Tibial artery (tissue), 4 donors: ENCODE measurements at regions of chr3 and their contacts with region 1.

Region 1: DNA sequence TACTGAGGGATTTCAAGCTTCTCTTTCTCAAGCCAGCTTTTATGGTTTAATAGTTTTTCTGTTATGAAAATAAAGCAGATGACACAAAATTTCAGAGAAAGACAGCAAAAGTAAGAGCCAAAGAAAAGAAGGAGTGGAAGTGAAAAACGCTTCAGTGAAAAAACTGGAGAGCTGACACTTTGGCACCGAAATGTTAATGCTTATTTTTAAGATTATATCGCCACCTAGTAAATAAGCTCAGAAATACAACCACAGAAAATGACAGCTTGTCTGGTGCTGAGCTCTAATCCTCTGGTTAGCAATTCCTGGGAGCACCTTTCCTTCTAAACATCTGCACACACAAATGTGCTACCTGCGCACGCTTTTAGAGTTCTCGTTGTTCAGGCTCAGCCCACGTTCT is 101.6 kb downstream of the ZPLD1 start:
- DNase-seq: no peak
- H3K4me3 ChIP-seq: no peak overlapping the region
- H3K27ac ChIP-seq: no peak overlapping the region
- H3K4me1 ChIP-seq: no peaks in the 10 kb centered on the region
- H3K27me3 ChIP-seq: no peaks in the 10 kb centered on the region
- CTCF ChIP-seq: peak; percentile 42 to 48

Region 2: GRCh38 chr3:101803173-101803782 is 733.2 kb before region 1 on chr3:
- intact Hi-C with region 1: loop called (anchors 10 kb)
- DNase-seq: no peak
- H3K4me3 ChIP-seq: no peak overlapping the region
- H3K27ac ChIP-seq: no peak overlapping the region
- H3K4me1 ChIP-seq: peaks cover 0 to 5% (median 0%) of the 10 kb centered on the region in 4 donors
- H3K27me3 ChIP-seq: no peaks in the 10 kb centered on the region
- CTCF ChIP-seq: peak; percentile 82 to 85

Region 3: DNA sequence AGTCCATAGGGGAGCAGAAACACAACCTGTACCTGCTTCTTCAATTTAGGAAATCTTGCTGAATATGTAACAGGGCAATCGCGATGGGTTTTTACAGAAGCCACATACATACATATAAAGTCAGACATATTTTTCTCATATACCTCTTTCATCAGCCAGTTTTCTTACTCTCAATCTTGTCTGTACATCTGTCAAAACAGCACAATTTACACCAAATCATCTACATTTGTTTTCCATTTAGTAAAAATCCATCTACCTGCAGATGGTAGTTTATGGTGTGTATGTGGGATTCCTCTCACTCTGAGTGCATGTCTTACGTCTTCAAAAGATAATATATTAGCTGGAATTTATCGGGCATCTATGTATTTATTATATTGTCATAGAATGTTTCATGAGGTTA is 107.1 kb after region 1 on chr3:
- intact Hi-C with region 1: no loop called
- DNase-seq: no peak
- H3K4me3 ChIP-seq: no peak overlapping the region
- H3K27ac ChIP-seq: no peak overlapping the region
- H3K4me1 ChIP-seq: no peaks in the 10 kb centered on the region
- H3K27me3 ChIP-seq: no peaks in the 10 kb centered on the region
- CTCF ChIP-seq: no peak